CD4-positive, alpha-beta memory T cell (primary cell): ENCODE measurements at regions of chrX and their contacts with region 1.

Region 1: GRCh38 chrX:120603707-120604360 is at the start of gene MCTS1:
- DNase-seq: peak; percentile 78 to 93 (median 86)
- H3K4me3 ChIP-seq: peak within 1 kb of the TSS; percentile 55 to 77
- H3K4me3 Mint-ChIP-seq: peak within 1 kb of the TSS; percentile 90 to 98 (median 94)
- H3K27ac ChIP-seq: peak within 1 kb of the TSS; percentile 85
- H3K27ac Mint-ChIP-seq: peak within 1 kb of the TSS; percentile 95 to 99 (median 98)
- H3K4me1 ChIP-seq: peaks cover 17% of the 10 kb centered on the region
- H3K4me1 Mint-ChIP-seq: peaks cover 6 to 14% (median 8%) of the 10 kb centered on the region in 4 donors
- H3K27me3 ChIP-seq: no peaks in the 10 kb centered on the region
- H3K27me3 Mint-ChIP-seq: no peaks in the 10 kb centered on the region
- total RNA-seq, gene MCTS1: 29.1 to 33.3 TPM

Region 2: DNA sequence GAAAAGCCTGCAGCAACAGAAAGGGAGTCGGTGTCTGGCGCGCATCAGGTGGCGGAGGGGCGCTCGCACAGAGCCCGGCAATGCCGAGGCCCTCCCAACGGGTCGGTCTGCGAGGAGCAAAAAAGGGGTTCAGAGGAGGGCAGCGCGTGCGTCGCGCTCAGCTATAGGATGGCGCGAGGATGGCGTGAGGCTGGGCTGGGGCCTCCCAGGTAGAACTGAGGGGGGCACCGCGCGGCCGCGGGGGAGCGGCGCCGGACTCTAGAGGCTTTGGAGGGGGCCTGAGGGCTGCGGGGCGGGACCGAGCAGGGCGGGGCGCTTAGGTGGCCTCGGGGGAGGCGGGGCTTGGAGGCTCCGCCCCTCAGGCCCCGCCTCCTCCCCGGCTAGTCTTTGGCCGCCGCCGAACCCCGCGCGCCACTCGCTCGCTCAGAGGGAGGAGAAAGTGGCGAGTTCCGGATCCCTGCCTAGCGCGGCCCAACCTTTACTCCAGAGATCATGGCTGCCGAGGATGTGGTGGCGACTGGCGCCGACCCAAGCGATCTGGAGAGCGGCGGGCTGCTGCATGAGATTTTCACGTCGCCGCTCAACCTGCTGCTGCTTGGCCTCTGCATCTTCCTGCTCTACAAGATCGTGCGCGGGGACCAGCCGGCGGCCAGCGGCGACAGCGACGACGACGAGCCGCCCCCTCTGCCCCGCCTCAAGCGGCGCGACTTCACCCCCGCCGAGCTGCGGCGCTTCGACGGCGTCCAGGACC is 1367.8 kb before region 1 on chrX and contains the start of gene PGRMC1:
- CTCF ChIA-PET with region 1: no interaction called
- POLR2A ChIA-PET with region 1: no interaction called
- intact Hi-C with region 1: loop called (anchors 5 kb)
- DNase-seq: peak; percentile 80 to 85 (median 84)
- H3K4me3 ChIP-seq: peak within 1 kb of the TSS; percentile 61 to 68
- H3K4me3 Mint-ChIP-seq: peak within 1 kb of the TSS; percentile 86 to 92 (median 90)
- H3K27ac ChIP-seq: peak within 1 kb of the TSS; percentile 52
- H3K27ac Mint-ChIP-seq: peak within 1 kb of the TSS; percentile 71 to 91 (median 83)
- H3K4me1 ChIP-seq: peaks cover 22% of the 10 kb centered on the region
- H3K4me1 Mint-ChIP-seq: peaks cover 9 to 38% (median 17%) of the 10 kb centered on the region in 4 donors
- H3K27me3 ChIP-seq: no peaks in the 10 kb centered on the region
- H3K27me3 Mint-ChIP-seq: no peaks in the 10 kb centered on the region
- total RNA-seq, gene PGRMC1: 15.9 to 17.2 TPM

Region 3: GRCh38 chrX:120560842-120561633 is 42.8 kb before region 1 on chrX and contains the start of gene CUL4B:
- CTCF ChIA-PET with region 1: interaction called, 12 read pairs
- POLR2A ChIA-PET with region 1: interaction called, 136 read pairs
- intact Hi-C with region 1: loop called (anchors 1 kb)
- DNase-seq: peak; percentile 89 to 97 (median 91)
- H3K4me3 ChIP-seq: peak within 1 kb of the TSS; percentile 59 to 90
- H3K4me3 Mint-ChIP-seq: peak within 1 kb of the TSS; percentile 91 to 99 (median 94)
- H3K27ac ChIP-seq: peak within 1 kb of the TSS; percentile 91
- H3K27ac Mint-ChIP-seq: peak within 1 kb of the TSS; percentile 94 to 98 (median 96)
- H3K4me1 ChIP-seq: peaks cover 31% of the 10 kb centered on the region
- H3K4me1 Mint-ChIP-seq: peaks cover 9 to 44% (median 17%) of the 10 kb centered on the region in 4 donors
- H3K27me3 ChIP-seq: no peaks in the 10 kb centered on the region
- H3K27me3 Mint-ChIP-seq: no peaks in the 10 kb centered on the region
- total RNA-seq, gene CUL4B: 54.0 to 61.0 TPM

Region 4: DNA sequence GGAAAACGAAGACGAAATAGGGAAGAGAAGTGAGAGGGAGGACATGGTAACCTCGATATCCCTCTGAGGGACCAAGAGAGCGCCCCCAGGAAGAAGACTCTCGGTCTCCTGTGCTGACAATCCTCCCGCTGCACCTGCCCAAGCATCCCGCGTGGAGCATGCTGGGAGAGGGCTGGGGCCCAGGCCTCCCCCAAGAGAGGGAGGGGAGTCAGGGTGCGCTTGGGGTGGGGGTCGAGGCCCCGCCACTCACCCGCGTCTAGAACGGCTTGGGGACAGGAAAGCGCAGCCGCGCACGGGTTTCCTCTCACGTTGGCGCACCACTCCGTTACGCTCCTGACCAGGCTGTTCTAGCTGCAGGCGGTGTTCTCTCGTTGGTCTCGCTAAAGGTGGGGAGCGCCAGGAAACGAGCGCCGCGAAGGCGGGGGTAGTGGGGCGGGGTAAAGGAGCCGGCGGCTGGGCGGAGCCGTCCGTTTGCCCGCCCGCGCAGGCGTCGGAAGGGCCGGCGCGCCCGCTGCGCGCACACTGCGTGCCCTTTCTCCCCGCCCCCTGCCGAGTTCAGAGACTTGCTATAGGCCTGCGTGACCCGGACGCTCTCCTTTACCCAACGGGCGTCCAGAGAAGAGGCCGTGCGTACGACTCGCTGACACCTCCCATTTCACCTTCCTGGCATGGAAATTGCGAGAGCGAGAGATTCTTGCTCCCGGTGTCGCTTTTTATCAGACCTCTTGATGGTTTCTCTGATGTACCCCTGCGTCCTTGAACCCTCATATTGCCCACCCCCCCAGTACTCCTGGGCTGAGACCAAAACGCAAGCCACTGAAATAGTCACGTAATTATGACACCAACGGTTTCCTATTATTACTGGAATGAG is 26.1 kb after region 1 on chrX and contains the start of gene C1GALT1C1:
- CTCF ChIA-PET with region 1: no interaction called
- POLR2A ChIA-PET with region 1: interaction called, 26 read pairs
- intact Hi-C with region 1: loop called (anchors 1 kb)
- DNase-seq: peak; percentile 90 to 95 (median 93)
- H3K4me3 ChIP-seq: peak within 1 kb of the TSS; percentile 76 to 79
- H3K4me3 Mint-ChIP-seq: peak within 1 kb of the TSS; percentile 89 to 98 (median 94)
- H3K27ac ChIP-seq: peak within 1 kb of the TSS; percentile 92
- H3K27ac Mint-ChIP-seq: peak within 1 kb of the TSS; percentile 92 to 99 (median 98)
- H3K4me1 ChIP-seq: peaks cover 27% of the 10 kb centered on the region
- H3K4me1 Mint-ChIP-seq: peaks cover 13 to 27% (median 19%) of the 10 kb centered on the region in 4 donors
- H3K27me3 ChIP-seq: no peaks in the 10 kb centered on the region
- H3K27me3 Mint-ChIP-seq: no peaks in the 10 kb centered on the region
- total RNA-seq, gene C1GALT1C1: 17.0 to 19.6 TPM